PC-9 (cell line): ENCODE measurements at regions of chr7 and their contacts with region 1.

Region 1: GRCh38 chr7:102440078-102440795 is 6.9 kb downstream of the ORAI2 start:
- DNase-seq: peak; percentile 86 to 93
- H3K4me3 ChIP-seq: no peak overlapping the region
- H3K27ac ChIP-seq: peak overlapping the region; percentile 55
- H3K4me1 ChIP-seq: peaks cover 16% of the 10 kb centered on the region
- H3K27me3 ChIP-seq: no peaks in the 10 kb centered on the region
- CTCF ChIP-seq: no peak

Region 2: DNA sequence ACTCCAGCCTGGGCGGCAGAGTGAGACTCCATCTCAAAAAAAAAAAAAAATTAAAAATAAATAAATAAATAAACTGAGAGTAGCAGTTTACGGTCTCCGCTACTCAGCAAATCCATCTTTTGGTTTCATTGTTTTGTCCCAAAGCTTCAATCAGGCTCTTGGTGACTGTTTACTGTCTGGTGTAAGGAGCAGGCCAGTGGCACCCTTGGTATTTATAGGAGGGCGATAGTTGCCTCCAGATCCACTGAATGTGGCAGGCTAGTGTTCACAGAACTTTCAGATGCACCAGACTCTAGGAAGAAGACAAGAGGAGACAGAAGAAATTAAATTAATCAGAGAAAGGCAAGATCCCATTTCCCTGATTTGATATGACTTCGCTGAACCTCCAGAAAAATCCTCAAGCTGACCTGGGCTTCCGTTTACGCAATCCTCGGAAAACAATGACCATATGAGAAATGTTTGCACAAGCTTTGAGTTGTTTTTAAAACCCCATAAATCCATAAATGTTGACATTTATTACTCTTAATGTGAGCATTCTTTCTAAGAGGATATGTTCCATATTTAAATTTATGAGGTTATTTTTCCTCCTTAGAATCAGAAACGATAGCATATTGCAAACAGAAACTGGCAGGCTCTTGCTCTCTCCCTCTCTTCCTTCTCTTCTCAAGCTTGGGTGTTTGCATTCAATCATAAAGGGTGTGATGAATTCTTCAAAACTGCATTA is 1498.0 kb before region 1 on chr7:
- CTCF ChIA-PET with region 1: no interaction called
- POLR2A ChIA-PET with region 1: no interaction called
- intact Hi-C with region 1: no loop called
- DNase-seq: peak in 1 of 2 experiments; percentile 91
- H3K4me3 ChIP-seq: peak overlapping the region; percentile 18; the same call in 1 of the 2 replicates
- H3K27ac ChIP-seq: peak overlapping the region; percentile 60
- H3K4me1 ChIP-seq: peaks cover 14% of the 10 kb centered on the region
- H3K27me3 ChIP-seq: peaks cover 18% of the 10 kb centered on the region
- CTCF ChIP-seq: no peak

Region 3: GRCh38 chr7:101058355-101058754 is 1381.9 kb before region 1 on chr7:
- CTCF ChIA-PET with region 1: no interaction called
- POLR2A ChIA-PET with region 1: no interaction called
- intact Hi-C with region 1: no loop called
- DNase-seq: peak in 1 of 2 experiments; percentile 58
- H3K4me3 ChIP-seq: no peak overlapping the region
- H3K27ac ChIP-seq: no peak overlapping the region
- H3K4me1 ChIP-seq: no peaks in the 10 kb centered on the region
- H3K27me3 ChIP-seq: peaks cover 61% of the 10 kb centered on the region
- CTCF ChIP-seq: no peak

Region 4: GRCh38 chr7:102425639-102426267 is 14.5 kb before region 1 on chr7:
- CTCF ChIA-PET with region 1: no interaction called
- POLR2A ChIA-PET with region 1: no interaction called
- intact Hi-C with region 1: no loop called
- DNase-seq: no peak
- H3K4me3 ChIP-seq: no peak overlapping the region
- H3K27ac ChIP-seq: no peak overlapping the region
- H3K4me1 ChIP-seq: peaks cover 11% of the 10 kb centered on the region
- H3K27me3 ChIP-seq: no peaks in the 10 kb centered on the region
- CTCF ChIP-seq: no peak

Region 5: DNA sequence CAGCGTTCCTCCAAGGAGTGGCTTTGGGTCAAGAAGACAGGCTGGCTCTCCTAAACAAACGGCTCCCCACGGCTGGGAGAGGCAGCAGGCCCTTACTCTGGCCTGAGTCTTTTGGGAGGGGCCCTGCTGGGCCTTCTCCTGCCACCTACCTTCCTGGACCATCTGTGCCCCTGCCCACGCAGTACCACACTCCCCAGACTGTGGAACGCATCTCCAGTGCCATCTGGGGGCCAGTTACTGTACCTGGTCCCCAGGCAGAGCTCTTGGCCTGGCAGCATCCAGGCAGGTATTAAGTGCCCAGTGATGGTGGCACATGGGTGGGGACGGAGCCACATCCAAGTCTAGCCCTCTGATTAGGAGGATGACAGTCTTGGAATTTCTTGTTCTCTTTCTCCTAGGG is 10.0 kb after region 1 on chr7:
- CTCF ChIA-PET with region 1: interaction called, 4 read pairs
- POLR2A ChIA-PET with region 1: no interaction called
- intact Hi-C with region 1: loop called (anchors 1 kb)
- DNase-seq: no peak
- H3K4me3 ChIP-seq: no peak overlapping the region
- H3K27ac ChIP-seq: no peak overlapping the region
- H3K4me1 ChIP-seq: no peaks in the 10 kb centered on the region
- H3K27me3 ChIP-seq: no peaks in the 10 kb centered on the region
- CTCF ChIP-seq: no peak